IMR-90 (cell line): ENCODE measurements at regions of chr7 and their contacts with region 1.

Region 1: GRCh38 chr7:106041140-106041717 is 70.9 kb downstream of the SYPL1 start:
- DNase-seq: peak; percentile 29
- ATAC-seq: peak; percentile 2; the same call in 1 of the 2 replicates
- H3K4me3 ChIP-seq: no peak overlapping the region
- H3K27ac ChIP-seq: peak overlapping the region; percentile 82; the same call in 1 of the 2 replicates
- H3K4me1 ChIP-seq: peaks cover 32% of the 10 kb centered on the region
- H3K27me3 ChIP-seq: peaks cover 7% of the 10 kb centered on the region
- CTCF ChIP-seq: peak; percentile 53
- POLR2A ChIP-seq: no peak
- RAD21 ChIP-seq: peak; percentile 30; the same call in 1 of the 2 replicates

Region 2: GRCh38 chr7:105387621-105388372 is 653.4 kb before region 1 on chr7:
- CTCF ChIA-PET with region 1: no interaction called
- POLR2A ChIA-PET with region 1: no interaction called
- dilution Hi-C with region 1: no loop called
- in situ Hi-C with region 1: no loop called
- intact Hi-C with region 1: loop called (anchors 2 kb)
- DNase-seq: peak; percentile 28
- ATAC-seq: peak; percentile 52
- H3K4me3 ChIP-seq: peak overlapping the region; percentile 92
- H3K27ac ChIP-seq: peak overlapping the region; percentile 45
- H3K4me1 ChIP-seq: no peaks in the 10 kb centered on the region
- H3K27me3 ChIP-seq: no peaks in the 10 kb centered on the region
- CTCF ChIP-seq: no peak
- POLR2A ChIP-seq: no peak
- RAD21 ChIP-seq: no peak

Region 3: DNA sequence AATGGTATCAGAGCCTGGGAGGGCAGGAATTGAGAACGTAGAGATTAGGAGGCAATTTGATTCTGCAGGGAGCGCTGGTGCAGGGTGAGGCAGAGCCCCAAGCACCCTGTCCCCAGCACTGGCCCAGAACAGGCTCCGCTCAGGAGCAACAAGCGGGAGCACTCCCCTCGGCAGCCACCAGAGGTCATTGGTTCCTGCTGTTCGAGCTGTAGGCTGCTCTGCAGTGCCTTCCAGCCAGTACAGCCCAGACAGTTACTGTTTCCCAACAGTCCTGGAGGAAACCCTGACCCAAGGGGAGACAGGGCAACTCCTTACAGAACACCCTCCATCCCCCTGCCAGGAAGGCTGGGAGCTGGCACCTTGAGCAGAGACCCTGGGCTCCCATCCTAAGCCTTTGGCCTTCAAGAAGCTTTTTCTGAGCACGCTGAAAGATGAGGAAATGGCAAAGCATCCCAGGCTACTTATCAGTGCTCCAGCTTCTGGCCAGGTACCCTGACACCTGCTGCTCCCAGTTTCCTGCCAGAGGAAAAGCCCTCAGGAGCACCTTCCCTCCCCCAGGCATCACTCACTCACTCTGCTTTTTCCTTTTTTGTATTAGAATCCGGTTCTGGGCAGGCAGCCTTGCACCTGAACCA is 388.8 kb before region 1 on chr7:
- CTCF ChIA-PET with region 1: no interaction called
- POLR2A ChIA-PET with region 1: no interaction called
- dilution Hi-C with region 1: no loop called
- in situ Hi-C with region 1: loop called (anchors 5 kb)
- intact Hi-C with region 1: loop called (anchors 1 kb)
- DNase-seq: peak; percentile 71
- ATAC-seq: peak; percentile 94
- H3K4me3 ChIP-seq: no peak overlapping the region
- H3K27ac ChIP-seq: no peak overlapping the region
- H3K4me1 ChIP-seq: peaks cover 10% of the 10 kb centered on the region; the same call in 1 of the 2 replicates
- H3K27me3 ChIP-seq: no peaks in the 10 kb centered on the region
- CTCF ChIP-seq: peak; percentile 85
- POLR2A ChIP-seq: no peak
- RAD21 ChIP-seq: peak; percentile 94

Region 4: DNA sequence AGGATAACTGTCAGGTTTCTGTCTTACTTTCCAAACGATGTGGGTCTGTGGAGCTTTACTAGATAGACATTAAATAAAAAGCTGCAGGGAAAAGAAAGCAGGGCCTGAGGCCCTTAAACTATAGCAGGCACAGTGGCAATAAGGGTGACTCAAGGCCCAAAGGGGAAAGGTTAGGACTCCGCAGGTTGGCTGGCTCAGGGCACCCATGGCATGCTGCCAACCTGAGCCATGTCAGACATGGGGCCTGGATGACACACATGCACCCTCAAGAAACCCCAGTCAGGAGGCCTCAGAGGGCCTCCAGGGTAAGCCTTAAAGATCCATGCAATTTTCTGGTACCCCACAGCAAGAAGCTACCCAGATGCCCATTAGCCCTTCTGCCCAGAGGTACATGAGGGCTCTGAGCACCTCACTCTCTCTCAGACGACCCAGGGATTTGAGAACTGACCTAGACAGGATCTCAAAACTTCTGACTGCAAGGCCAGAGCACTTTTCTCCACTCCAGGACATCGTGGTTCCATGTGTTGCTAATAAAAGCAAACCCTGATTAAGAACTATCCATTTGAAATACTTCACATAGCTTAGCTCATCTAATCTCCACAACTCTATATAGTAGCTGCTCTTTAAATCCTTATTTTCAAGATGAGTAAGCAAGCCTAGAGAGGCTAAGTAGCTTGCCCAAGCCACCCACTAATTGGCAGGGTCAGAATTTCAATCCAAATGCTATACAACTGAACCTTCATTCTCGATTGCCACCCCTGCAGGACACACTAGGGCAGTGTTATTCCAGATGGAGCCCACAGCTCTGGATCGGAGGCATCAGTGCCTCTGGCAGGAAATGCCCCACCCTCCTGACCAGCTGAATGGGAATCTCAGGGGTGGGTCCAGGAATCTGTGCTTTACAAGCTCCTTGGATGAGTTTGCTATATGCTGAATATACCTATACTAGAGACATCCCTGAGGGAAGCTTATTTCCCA is 327.5 kb before region 1 on chr7:
- CTCF ChIA-PET with region 1: no interaction called
- POLR2A ChIA-PET with region 1: no interaction called
- dilution Hi-C with region 1: no loop called
- in situ Hi-C with region 1: no loop called
- intact Hi-C with region 1: no loop called
- DNase-seq: no peak
- ATAC-seq: peak; percentile 75
- H3K4me3 ChIP-seq: no peak overlapping the region
- H3K27ac ChIP-seq: no peak overlapping the region
- H3K4me1 ChIP-seq: peaks cover 2% of the 10 kb centered on the region; the same call in 1 of the 2 replicates
- H3K27me3 ChIP-seq: no peaks in the 10 kb centered on the region
- CTCF ChIP-seq: no peak
- POLR2A ChIP-seq: no peak
- RAD21 ChIP-seq: no peak

Region 5: GRCh38 chr7:105769901-105770628 is 271.2 kb before region 1 on chr7:
- CTCF ChIA-PET with region 1: no interaction called
- POLR2A ChIA-PET with region 1: no interaction called
- dilution Hi-C with region 1: no loop called
- in situ Hi-C with region 1: loop called (anchors 5 kb)
- intact Hi-C with region 1: no loop called
- DNase-seq: peak; percentile 51
- ATAC-seq: peak; percentile 54
- H3K4me3 ChIP-seq: no peak overlapping the region
- H3K27ac ChIP-seq: peak overlapping the region; percentile 71; the same call in 1 of the 2 replicates
- H3K4me1 ChIP-seq: peaks cover 27% of the 10 kb centered on the region
- H3K27me3 ChIP-seq: no peaks in the 10 kb centered on the region
- CTCF ChIP-seq: no peak
- POLR2A ChIP-seq: no peak
- RAD21 ChIP-seq: no peak

Region 6: GRCh38 chr7:105830391-105831301 is 210.6 kb before region 1 on chr7:
- CTCF ChIA-PET with region 1: no interaction called
- POLR2A ChIA-PET with region 1: no interaction called
- dilution Hi-C with region 1: no loop called
- in situ Hi-C with region 1: no loop called
- intact Hi-C with region 1: loop called (anchors 5 kb)
- DNase-seq: peak; percentile 98
- ATAC-seq: peak; percentile 89
- H3K4me3 ChIP-seq: no peak overlapping the region
- H3K27ac ChIP-seq: peak overlapping the region; percentile 92
- H3K4me1 ChIP-seq: peaks cover 28% of the 10 kb centered on the region
- H3K27me3 ChIP-seq: no peaks in the 10 kb centered on the region
- CTCF ChIP-seq: no peak
- POLR2A ChIP-seq: no peak
- RAD21 ChIP-seq: no peak

Region 7: DNA sequence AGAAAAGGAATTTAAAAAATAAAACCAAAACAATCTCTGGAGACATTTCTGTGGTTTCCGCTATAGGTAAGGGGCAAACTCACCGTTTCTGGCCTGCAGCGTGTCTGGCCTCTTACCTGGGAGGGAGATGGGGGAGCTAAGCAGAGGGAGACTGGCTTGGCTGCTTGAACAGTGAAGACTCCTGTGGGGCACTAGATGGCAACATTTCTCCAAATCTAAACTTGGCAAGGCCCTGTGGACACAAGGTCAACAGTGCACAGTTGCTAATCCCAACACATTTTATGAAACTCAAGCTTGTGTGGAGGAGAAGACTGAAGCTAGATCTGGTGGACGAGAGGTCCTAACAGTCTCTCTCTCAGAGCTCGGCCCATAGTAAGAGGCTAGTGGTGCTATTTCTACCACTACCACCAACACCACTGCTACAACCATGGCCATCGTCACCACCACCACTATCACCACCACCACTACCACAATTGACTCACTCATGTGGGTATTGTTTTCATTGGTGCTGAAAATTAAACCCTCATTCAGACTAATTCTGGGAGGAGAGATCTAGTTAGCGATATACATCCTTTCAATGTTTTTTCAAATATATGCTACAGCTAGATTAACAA is 106.5 kb before region 1 on chr7:
- CTCF ChIA-PET with region 1: interaction called, 9 read pairs
- POLR2A ChIA-PET with region 1: no interaction called
- dilution Hi-C with region 1: no loop called
- in situ Hi-C with region 1: no loop called
- intact Hi-C with region 1: loop called (anchors 1 kb)
- DNase-seq: peak; percentile 47
- ATAC-seq: peak; percentile 71
- H3K4me3 ChIP-seq: no peak overlapping the region
- H3K27ac ChIP-seq: no peak overlapping the region
- H3K4me1 ChIP-seq: peaks cover 6% of the 10 kb centered on the region; the same call in 1 of the 2 replicates
- H3K27me3 ChIP-seq: peaks cover 4% of the 10 kb centered on the region
- CTCF ChIP-seq: peak; percentile 48
- POLR2A ChIP-seq: no peak
- RAD21 ChIP-seq: peak; percentile 36; the same call in 1 of the 2 replicates

Region 8: GRCh38 chr7:106176414-106177299 is 135.4 kb after region 1 on chr7:
- CTCF ChIA-PET with region 1: no interaction called
- POLR2A ChIA-PET with region 1: no interaction called
- dilution Hi-C with region 1: no loop called
- in situ Hi-C with region 1: no loop called
- intact Hi-C with region 1: no loop called
- DNase-seq: peak; percentile 69
- ATAC-seq: peak; percentile 96
- H3K4me3 ChIP-seq: no peak overlapping the region
- H3K27ac ChIP-seq: no peak overlapping the region
- H3K4me1 ChIP-seq: peaks cover 5% of the 10 kb centered on the region; the same call in 1 of the 2 replicates
- H3K27me3 ChIP-seq: peaks cover 1% of the 10 kb centered on the region; the same call in 1 of the 2 replicates
- CTCF ChIP-seq: peak; percentile 98
- POLR2A ChIP-seq: peak; percentile 64
- RAD21 ChIP-seq: peak; percentile 99